ENCODE measurements at regions of chr18 and their contacts with region 1.

Region 1: DNA sequence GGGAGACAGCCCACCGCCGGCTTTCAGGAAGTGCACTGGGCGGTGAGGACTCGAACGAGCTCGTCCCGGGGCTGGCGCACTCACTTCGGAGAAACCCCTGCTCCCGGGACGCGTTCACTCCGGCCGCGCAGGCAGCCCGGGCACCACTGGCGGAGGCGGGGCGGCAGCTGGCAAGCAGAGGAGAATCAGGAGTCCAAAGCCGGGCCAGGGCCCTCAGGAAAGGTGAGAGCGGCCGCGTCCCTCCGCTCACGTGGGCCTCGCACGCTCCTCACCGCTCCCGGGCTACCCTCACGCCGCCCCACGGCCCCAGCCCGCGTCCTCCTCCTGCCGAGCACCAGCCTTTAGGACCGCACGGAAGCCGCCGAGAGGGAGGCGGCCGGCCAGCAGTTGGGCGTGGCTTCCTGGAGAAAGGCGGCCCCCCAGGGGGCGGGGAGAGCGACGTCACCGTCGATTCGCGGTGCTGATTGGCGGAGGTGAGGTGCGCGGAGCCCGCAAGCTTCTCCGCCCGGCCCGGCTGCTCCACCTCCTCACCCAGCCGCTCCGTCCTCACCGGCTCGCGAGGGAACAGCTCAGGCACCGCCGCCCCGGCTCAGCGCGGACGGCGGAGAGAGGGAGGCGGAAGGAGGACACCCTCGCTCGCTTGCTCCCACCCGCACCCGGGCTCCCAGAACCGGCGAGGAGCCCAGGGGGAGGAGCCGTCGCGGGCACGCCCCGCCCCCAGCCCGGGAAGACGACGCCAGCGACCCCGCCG is at the start of gene ZCCHC2:
- DNase-seq: peak; percentile 100
- ATAC-seq: peak; percentile 75
- H3K4me3 Mint-ChIP-seq: peak within 1 kb of the TSS; percentile 95
- H3K27ac Mint-ChIP-seq: peak within 1 kb of the TSS; percentile 84
- H3K4me1 Mint-ChIP-seq: peaks cover 31% of the 10 kb centered on the region
- H3K27me3 Mint-ChIP-seq: no peaks in the 10 kb centered on the region
- CTCF ChIP-seq: no peak
- total RNA-seq, gene ZCCHC2: 28.6 and 29.4 TPM in 2 replicates

Region 2: GRCh38 chr18:62186774-62187542 is 335.7 kb before region 1 on chr18 and contains the starts of genes PIGN and RELCH:
- CTCF ChIA-PET with region 1: no interaction called
- POLR2A ChIA-PET with region 1: interaction called, 5 read pairs
- intact Hi-C with region 1: loop called (anchors 1 kb)
- DNase-seq: peak; percentile 73
- ATAC-seq: peak; percentile 94
- H3K4me3 Mint-ChIP-seq: peak within 1 kb of the TSS; percentile 98
- H3K27ac Mint-ChIP-seq: peak within 1 kb of the TSS; percentile 95
- H3K4me1 Mint-ChIP-seq: peaks cover 58% of the 10 kb centered on the region
- H3K27me3 Mint-ChIP-seq: no peaks in the 10 kb centered on the region
- CTCF ChIP-seq: no peak
- total RNA-seq, gene PIGN: 26.4 and 29.4 TPM in 2 replicates
- total RNA-seq, gene RELCH: 45.4 and 59.0 TPM in 2 replicates

Region 3: DNA sequence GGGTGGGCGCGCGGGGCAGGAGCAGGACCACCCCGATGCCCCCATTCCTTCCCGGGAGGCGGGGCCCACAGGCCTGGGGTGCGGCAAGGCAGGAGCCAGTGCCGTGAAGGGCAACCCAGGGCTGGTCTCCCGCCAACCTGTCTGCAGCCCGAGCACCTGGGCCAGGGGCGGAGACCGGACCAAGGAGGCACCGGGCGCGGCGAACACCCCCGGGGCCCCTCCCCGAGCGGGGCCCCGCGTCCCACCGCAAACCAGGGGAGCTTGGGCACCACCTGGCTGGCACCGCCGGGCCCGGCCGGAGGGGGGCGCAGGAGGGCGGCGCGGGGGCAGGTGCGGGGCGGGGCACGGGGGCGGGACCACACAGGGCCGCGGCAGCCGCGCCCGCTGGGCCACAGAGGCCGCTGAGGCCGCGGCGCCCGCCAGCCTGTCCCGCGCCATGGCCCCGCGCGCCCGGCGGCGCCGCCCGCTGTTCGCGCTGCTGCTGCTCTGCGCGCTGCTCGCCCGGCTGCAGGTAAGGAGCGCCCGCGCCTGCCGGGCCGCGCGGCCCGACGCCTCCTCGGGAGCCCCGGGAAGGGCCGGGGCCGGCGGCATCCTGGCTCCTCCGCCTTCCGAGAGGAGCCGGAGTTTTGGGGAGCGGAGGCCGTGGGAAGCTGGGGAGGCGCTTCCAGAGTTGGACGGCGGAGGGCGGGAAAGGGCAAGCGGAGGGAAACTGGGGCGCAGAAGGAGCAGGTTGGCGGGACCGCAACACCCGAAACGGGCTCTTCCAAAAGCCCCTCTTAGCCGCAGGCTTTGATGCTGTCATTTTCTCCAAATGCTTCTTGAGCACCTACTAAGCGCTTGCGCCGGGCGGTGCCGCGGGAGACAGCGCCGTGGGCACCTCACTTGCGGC is 197.5 kb before region 1 on chr18 and contains the start of gene TNFRSF11A:
- CTCF ChIA-PET with region 1: no interaction called
- POLR2A ChIA-PET with region 1: interaction called, 5 read pairs
- intact Hi-C with region 1: loop called (anchors 5 kb)
- DNase-seq: peak; percentile 61
- ATAC-seq: peak; percentile 93
- H3K4me3 Mint-ChIP-seq: peak within 1 kb of the TSS; percentile 76
- H3K27ac Mint-ChIP-seq: no peak within 1 kb of the TSS
- H3K4me1 Mint-ChIP-seq: peaks cover 21% of the 10 kb centered on the region
- H3K27me3 Mint-ChIP-seq: peaks cover 50% of the 10 kb centered on the region
- CTCF ChIP-seq: no peak
- total RNA-seq, gene TNFRSF11A: 0.07 and 0.24 TPM in 2 replicates

Region 4: GRCh38 chr18:62460851-62461300 is 61.8 kb before region 1 on chr18:
- CTCF ChIA-PET with region 1: no interaction called
- POLR2A ChIA-PET with region 1: no interaction called
- intact Hi-C with region 1: no loop called
- DNase-seq: no peak
- ATAC-seq: no peak
- H3K4me3 Mint-ChIP-seq: no peak overlapping the region
- H3K27ac Mint-ChIP-seq: no peak overlapping the region
- H3K4me1 Mint-ChIP-seq: no peaks in the 10 kb centered on the region
- H3K27me3 Mint-ChIP-seq: no peaks in the 10 kb centered on the region
- CTCF ChIP-seq: no peak

Region 5: GRCh38 chr18:62505669-62506494 is 16.8 kb before region 1 on chr18:
- CTCF ChIA-PET with region 1: no interaction called
- POLR2A ChIA-PET with region 1: interaction called, 52 read pairs
- intact Hi-C with region 1: loop called (anchors 1 kb)
- DNase-seq: no peak
- ATAC-seq: peak; percentile 84
- H3K4me3 Mint-ChIP-seq: peak overlapping the region; percentile 73
- H3K27ac Mint-ChIP-seq: peak overlapping the region; percentile 92
- H3K4me1 Mint-ChIP-seq: peaks cover 19% of the 10 kb centered on the region
- H3K27me3 Mint-ChIP-seq: no peaks in the 10 kb centered on the region
- CTCF ChIP-seq: no peak

Region 6: GRCh38 chr18:62584241-62585120 is 61.8 kb after region 1 on chr18:
- CTCF ChIA-PET with region 1: interaction called, 4 read pairs
- POLR2A ChIA-PET with region 1: no interaction called
- intact Hi-C with region 1: loop called (anchors 1 kb)
- DNase-seq: peak; percentile 67
- ATAC-seq: peak; percentile 96
- H3K4me3 Mint-ChIP-seq: no peak overlapping the region
- H3K27ac Mint-ChIP-seq: no peak overlapping the region
- H3K4me1 Mint-ChIP-seq: peaks cover 26% of the 10 kb centered on the region
- H3K27me3 Mint-ChIP-seq: no peaks in the 10 kb centered on the region
- CTCF ChIP-seq: no peak

Region 7: DNA sequence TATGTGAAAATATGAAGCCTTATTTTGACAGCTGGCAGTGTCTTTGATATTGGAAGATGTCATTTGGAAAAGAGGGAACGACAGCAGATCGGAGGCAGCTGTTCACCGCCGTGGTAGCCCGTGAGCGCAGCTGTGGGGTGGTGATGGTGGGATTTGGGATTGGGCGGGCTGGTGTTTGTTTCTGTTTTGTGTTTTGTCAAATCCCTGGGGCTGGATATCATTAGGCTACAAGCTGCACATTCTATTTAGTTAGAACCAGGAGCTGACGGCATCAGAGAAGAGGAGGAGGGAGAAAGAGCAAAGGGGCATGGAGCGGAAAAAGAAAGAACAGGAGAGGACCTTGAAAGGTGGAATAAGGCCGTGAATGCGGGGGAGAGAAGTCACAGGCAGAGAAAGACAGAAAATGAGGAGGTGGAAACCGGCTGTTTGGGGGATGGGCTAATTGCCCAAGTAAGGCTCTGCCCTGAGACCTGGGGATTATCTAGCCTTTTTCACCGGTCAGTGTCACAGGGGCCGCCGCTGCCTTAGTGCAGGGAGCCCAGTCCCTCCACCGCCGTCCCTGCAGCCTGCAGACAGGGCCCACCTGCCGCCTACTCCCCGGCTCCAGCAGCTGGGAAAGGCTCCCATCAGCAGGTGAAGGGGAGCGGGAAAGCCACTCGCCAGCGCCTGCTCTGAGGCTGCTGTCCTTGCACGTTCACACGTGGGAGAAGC is 88.2 kb after region 1 on chr18:
- CTCF ChIA-PET with region 1: no interaction called
- POLR2A ChIA-PET with region 1: no interaction called
- intact Hi-C with region 1: no loop called
- DNase-seq: no peak
- ATAC-seq: no peak
- H3K4me3 Mint-ChIP-seq: no peak overlapping the region
- H3K27ac Mint-ChIP-seq: no peak overlapping the region
- H3K4me1 Mint-ChIP-seq: peaks cover 10% of the 10 kb centered on the region
- H3K27me3 Mint-ChIP-seq: peaks cover 13% of the 10 kb centered on the region
- CTCF ChIP-seq: no peak

Region 8: DNA sequence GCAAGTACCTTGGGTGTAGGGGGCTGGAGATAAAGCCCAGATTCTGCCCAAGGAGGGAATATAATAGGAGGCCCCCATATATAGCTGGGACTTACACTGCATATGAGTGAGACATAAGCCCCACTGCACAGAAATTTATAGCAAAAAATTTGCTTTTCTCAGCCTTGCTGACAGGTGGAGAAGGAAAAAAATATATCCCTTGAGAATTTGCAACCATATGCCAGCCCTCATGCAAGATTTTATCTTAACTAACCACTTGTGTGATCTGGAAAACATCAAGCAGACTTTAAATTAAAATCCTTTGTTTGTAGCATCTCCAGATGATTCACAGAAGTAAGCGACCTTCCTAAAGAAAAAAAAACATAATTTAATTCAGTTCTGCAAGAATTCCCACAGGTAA is 508.7 kb after region 1 on chr18:
- CTCF ChIA-PET with region 1: no interaction called
- POLR2A ChIA-PET with region 1: no interaction called
- intact Hi-C with region 1: no loop called
- DNase-seq: no peak
- ATAC-seq: no peak
- H3K4me3 Mint-ChIP-seq: no peak overlapping the region
- H3K27ac Mint-ChIP-seq: no peak overlapping the region
- H3K4me1 Mint-ChIP-seq: peaks cover 11% of the 10 kb centered on the region
- H3K27me3 Mint-ChIP-seq: no peaks in the 10 kb centered on the region
- CTCF ChIP-seq: no peak

Region 9: GRCh38 chr18:63155169-63155852 is 632.6 kb after region 1 on chr18:
- CTCF ChIA-PET with region 1: no interaction called
- POLR2A ChIA-PET with region 1: no interaction called
- intact Hi-C with region 1: loop called (anchors 5 kb)
- DNase-seq: peak; percentile 73
- ATAC-seq: peak; percentile 63
- H3K4me3 Mint-ChIP-seq: peak overlapping the region; percentile 84
- H3K27ac Mint-ChIP-seq: peak overlapping the region; percentile 99
- H3K4me1 Mint-ChIP-seq: peaks cover 99% of the 10 kb centered on the region
- H3K27me3 Mint-ChIP-seq: no peaks in the 10 kb centered on the region
- CTCF ChIP-seq: peak; percentile 76

Region 10: GRCh38 chr18:63422087-63422809 is 899.6 kb after region 1 on chr18 and contains the start of gene VPS4B:
- CTCF ChIA-PET with region 1: no interaction called
- POLR2A ChIA-PET with region 1: interaction called, 4 read pairs
- intact Hi-C with region 1: loop called (anchors 1 kb)
- DNase-seq: peak; percentile 100
- ATAC-seq: peak; percentile 96
- H3K4me3 Mint-ChIP-seq: peak within 1 kb of the TSS; percentile 99
- H3K27ac Mint-ChIP-seq: peak within 1 kb of the TSS; percentile 98
- H3K4me1 Mint-ChIP-seq: peaks cover 37% of the 10 kb centered on the region
- H3K27me3 Mint-ChIP-seq: peaks cover 2% of the 10 kb centered on the region
- CTCF ChIP-seq: no peak
- total RNA-seq, gene VPS4B: 66.2 and 66.8 TPM in 2 replicates